ENCODE measurements at regions of chr4 and their contacts with region 1.

Region 1: DNA sequence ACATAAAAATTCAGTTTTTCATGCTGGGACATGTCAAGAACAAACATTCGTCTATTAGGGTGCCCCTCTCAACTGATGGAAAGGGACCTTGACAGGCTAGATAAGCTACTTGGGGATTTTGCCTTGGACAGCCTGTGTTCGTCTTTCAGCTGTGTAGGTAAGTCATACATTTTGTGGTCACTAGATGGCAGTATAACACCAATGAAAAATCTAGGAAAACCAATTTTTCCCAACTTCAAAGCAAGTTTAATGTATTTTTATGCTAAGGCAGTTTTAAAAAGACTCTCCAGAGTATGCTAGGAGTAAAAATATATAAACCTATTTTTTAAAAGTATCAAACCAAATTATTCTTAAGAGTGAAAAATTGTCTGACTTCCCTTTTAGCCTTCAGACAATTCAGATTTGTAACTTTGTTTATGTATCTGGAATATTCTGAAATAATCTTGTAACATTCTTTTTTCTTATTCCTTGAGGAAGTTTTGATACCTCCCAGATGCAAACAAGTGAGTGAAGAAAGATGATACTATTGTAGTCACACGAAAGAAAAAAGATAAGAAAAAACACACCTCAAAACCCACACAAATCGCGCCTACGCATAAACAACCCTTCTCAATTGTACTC is 158.3 kb downstream of the CPE start:
- DNase-seq: no peak
- ATAC-seq: peak; percentile 77 to 88 (median 80)
- H3K4me3 ChIP-seq: no peak overlapping the region
- H3K27ac ChIP-seq: no peak overlapping the region
- H3K4me1 ChIP-seq: no peaks in the 10 kb centered on the region
- H3K27me3 ChIP-seq: no peaks in the 10 kb centered on the region
- CTCF ChIP-seq: peak; percentile 62 to 84 (median 76)
- POLR2A ChIP-seq: no peak

Region 2: DNA sequence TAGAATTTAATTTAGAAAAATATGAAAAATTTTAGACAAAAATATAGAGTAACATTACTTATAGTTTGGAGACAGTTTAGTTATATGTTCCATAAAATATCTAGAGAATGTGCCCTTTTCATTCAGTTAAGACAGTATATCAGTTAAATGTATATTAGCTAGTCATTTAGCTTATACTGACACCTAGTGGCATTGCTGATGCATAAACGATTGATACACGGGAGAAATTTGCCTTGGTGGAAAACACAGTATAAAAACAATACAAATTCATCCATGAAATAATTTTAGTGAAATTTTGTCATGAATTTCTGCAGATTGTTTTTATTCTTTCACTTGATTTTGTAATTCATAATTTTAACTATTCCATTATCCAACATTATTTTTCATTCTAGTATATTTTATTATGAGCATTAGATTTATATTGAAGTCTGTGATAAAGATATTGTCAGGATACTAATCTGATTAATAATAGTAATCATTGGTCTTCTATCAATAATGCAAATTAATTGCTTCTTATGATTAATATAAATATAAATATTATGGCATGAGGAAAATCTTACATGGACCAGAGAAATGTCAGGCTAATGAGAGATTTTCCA is 554.9 kb after region 1 on chr4:
- intact Hi-C with region 1: loop called (anchors 5 to 10 kb)
- DNase-seq: no peak
- ATAC-seq: peak; percentile 70 to 82 (median 74)
- H3K4me3 ChIP-seq: no peak overlapping the region
- H3K27ac ChIP-seq: no peak overlapping the region
- H3K4me1 ChIP-seq: no peaks in the 10 kb centered on the region
- H3K27me3 ChIP-seq: no peaks in the 10 kb centered on the region
- CTCF ChIP-seq: peak; percentile 66 to 76 (median 68)
- POLR2A ChIP-seq: no peak

Measured in right lobe of liver (tissue), 6 donors.